Activated B cell treated with CpG ODN at 0.5 μM for 24 hours (primary cell): ENCODE measurements at regions of chrX and their contacts with region 1.

Region 1: GRCh38 chrX:115912372-115912897 is 258.1 kb upstream of the AGTR2 start:
- DNase-seq: no peak
- ATAC-seq: peak; percentile 77
- H3K4me3 Mint-ChIP-seq: no peak overlapping the region
- H3K27ac Mint-ChIP-seq: no peak overlapping the region
- H3K4me1 Mint-ChIP-seq: peaks cover 10% of the 10 kb centered on the region
- H3K27me3 Mint-ChIP-seq: peaks cover 2% of the 10 kb centered on the region
- CTCF ChIP-seq: no peak

Region 2: GRCh38 chrX:115939070-115939469 is 26.6 kb after region 1 on chrX:
- CTCF ChIA-PET with region 1: no interaction called
- POLR2A ChIA-PET with region 1: no interaction called
- intact Hi-C with region 1: loop called (anchors 2 kb)
- DNase-seq: no peak
- ATAC-seq: peak; percentile 28
- H3K4me3 Mint-ChIP-seq: peak overlapping the region; percentile 58
- H3K27ac Mint-ChIP-seq: no peak overlapping the region
- H3K4me1 Mint-ChIP-seq: peaks cover 20% of the 10 kb centered on the region
- H3K27me3 Mint-ChIP-seq: no peaks in the 10 kb centered on the region
- CTCF ChIP-seq: no peak

Region 3: DNA sequence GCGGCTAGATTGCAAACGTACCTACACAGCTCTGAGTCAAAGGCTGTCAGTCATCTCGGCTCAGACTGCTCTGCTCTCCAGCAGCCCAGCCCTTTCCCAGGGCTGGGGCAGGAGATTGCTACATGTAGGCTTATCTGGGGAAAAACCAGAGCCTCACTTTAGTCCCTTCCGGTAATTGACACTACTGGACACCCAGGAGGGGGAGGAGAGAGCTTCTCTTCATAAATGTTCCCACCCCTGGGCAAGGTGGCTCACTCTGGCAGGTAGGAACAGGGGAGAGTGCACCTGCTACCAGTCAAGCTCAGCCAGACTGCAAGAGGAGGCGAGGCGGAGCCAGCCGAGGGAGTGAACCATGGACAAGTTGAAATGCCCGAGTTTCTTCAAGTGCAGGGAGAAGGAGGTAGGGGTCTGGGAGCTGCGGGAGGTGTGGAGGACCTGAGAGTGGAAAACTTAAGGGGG is 524.0 kb after region 1 on chrX and contains the start of gene SLC6A14:
- CTCF ChIA-PET with region 1: no interaction called
- POLR2A ChIA-PET with region 1: no interaction called
- intact Hi-C with region 1: no loop called
- DNase-seq: no peak
- ATAC-seq: no peak
- H3K4me3 Mint-ChIP-seq: no peak within 1 kb of the TSS
- H3K27ac Mint-ChIP-seq: no peak within 1 kb of the TSS
- H3K4me1 Mint-ChIP-seq: no peaks in the 10 kb centered on the region
- H3K27me3 Mint-ChIP-seq: no peaks in the 10 kb centered on the region
- CTCF ChIP-seq: no peak
- total RNA-seq, gene SLC6A14: not detected in 2 replicates